Naive thymus-derived CD4-positive, alpha-beta T cell (primary cell): ENCODE measurements at regions of chr12 and their contacts with region 1.

Region 1: DNA sequence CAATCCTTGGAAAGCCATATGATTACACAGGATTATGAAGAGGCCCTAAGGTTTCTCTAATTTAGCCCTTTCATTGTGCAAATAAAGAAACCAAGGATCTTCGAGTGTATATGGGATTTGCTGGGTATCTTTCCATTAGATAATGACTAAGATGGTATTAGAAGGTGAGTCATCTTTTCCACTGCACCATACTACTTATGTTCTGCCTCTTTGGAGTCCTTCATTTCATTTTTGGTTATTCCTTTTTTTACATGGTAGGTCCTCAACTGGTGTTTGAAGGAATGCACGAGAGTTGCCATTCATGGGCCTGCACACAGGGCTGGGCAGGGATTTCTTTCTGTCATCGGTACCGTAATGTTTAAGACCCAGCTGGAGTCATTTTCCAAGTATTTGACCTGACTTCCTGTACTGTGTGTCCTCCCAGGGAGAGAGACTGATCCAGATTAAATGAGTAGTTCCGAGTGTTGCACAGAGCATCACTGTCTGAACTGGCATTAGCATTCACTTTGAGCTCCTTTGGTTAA is 85.7 kb downstream of the BORCS5 start:
- DNase-seq: peak in 1 of 9 donors; percentile 32
- ATAC-seq: no peak
- H3K4me3 ChIP-seq: no peak overlapping the region
- H3K4me3 Mint-ChIP-seq: peak overlapping the region in 9 of 10 donors; percentile 9 to 78 (median 56)
- H3K27ac ChIP-seq: peak overlapping the region; percentile 61
- H3K27ac Mint-ChIP-seq: peak overlapping the region; percentile 92 to 99 (median 97)
- H3K4me1 ChIP-seq: peaks cover 52 to 54% of the 10 kb centered on the region in 2 donors
- H3K4me1 Mint-ChIP-seq: peaks cover 39 to 72% (median 66%) of the 10 kb centered on the region in 7 donors
- H3K27me3 ChIP-seq: no peaks in the 10 kb centered on the region
- H3K27me3 Mint-ChIP-seq: no peaks in the 10 kb centered on the region

Region 2: GRCh38 chr12:12403264-12404248 is 39.1 kb before region 1 on chr12:
- CTCF ChIA-PET with region 1: interaction called, 3 read pairs
- POLR2A ChIA-PET with region 1: no interaction called
- intact Hi-C with region 1: loop called (anchors 5 kb)
- DNase-seq: peak in 7 of 9 donors; percentile 25 to 63 (median 39)
- ATAC-seq: peak; percentile 85
- H3K4me3 ChIP-seq: no peak overlapping the region
- H3K4me3 Mint-ChIP-seq: peak overlapping the region in 5 of 10 donors; percentile 6 to 21 (median 13)
- H3K27ac ChIP-seq: no peak overlapping the region
- H3K27ac Mint-ChIP-seq: peak overlapping the region; percentile 21 to 90 (median 74)
- H3K4me1 ChIP-seq: peaks cover 7 to 10% of the 10 kb centered on the region in 2 donors
- H3K4me1 Mint-ChIP-seq: peaks cover 21 to 43% (median 34%) of the 10 kb centered on the region in 7 donors
- H3K27me3 ChIP-seq: no peaks in the 10 kb centered on the region
- H3K27me3 Mint-ChIP-seq: no peaks in the 10 kb centered on the region

Region 3: GRCh38 chr12:12467688-12468261 is 25.2 kb after region 1 on chr12:
- CTCF ChIA-PET with region 1: interaction called, 7 read pairs
- POLR2A ChIA-PET with region 1: interaction called, 13 read pairs
- intact Hi-C with region 1: loop called in 1 of 2 experiments (anchors 1 kb)
- DNase-seq: peak in 3 of 9 donors; percentile 15 to 37 (median 35)
- ATAC-seq: peak; percentile 38
- H3K4me3 ChIP-seq: no peak overlapping the region
- H3K4me3 Mint-ChIP-seq: peak overlapping the region in 9 of 10 donors; percentile 16 to 70 (median 50)
- H3K27ac ChIP-seq: peak overlapping the region; percentile 75
- H3K27ac Mint-ChIP-seq: peak overlapping the region; percentile 89 to 99 (median 96)
- H3K4me1 ChIP-seq: peaks cover 29 to 39% of the 10 kb centered on the region in 2 donors
- H3K4me1 Mint-ChIP-seq: peaks cover 19 to 63% (median 52%) of the 10 kb centered on the region in 7 donors
- H3K27me3 ChIP-seq: no peaks in the 10 kb centered on the region
- H3K27me3 Mint-ChIP-seq: no peaks in the 10 kb centered on the region

Region 4: DNA sequence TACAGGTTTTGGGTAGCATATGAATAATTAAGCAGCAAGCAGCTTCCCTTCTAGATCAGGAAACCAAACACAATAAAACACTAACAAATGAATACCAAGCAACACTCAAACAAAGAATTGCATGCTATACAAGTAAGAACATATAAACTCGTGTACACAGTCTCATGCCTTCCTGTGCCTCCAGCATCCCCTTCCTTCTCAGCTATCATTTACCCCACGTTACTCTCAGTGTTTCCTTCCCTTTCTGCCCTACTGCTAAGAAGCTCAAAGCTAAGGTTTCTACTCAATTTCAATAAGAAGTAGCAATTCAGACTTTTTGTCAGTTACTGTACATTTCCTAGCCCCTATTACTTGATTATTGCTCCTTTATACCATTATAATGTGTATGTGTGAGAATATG is 39.0 kb after region 1 on chr12:
- CTCF ChIA-PET with region 1: no interaction called
- POLR2A ChIA-PET with region 1: interaction called, 10 read pairs
- intact Hi-C with region 1: loop called (anchors 1 kb)
- DNase-seq: peak in 7 of 9 donors; percentile 54 to 83 (median 66)
- ATAC-seq: peak; percentile 71
- H3K4me3 ChIP-seq: peak overlapping the region; percentile 27
- H3K4me3 Mint-ChIP-seq: peak overlapping the region in 9 of 10 donors; percentile 11 to 87 (median 76)
- H3K27ac ChIP-seq: peak overlapping the region; percentile 86
- H3K27ac Mint-ChIP-seq: peak overlapping the region; percentile 94 to 99 (median 96)
- H3K4me1 ChIP-seq: peaks cover 25 to 26% of the 10 kb centered on the region in 2 donors
- H3K4me1 Mint-ChIP-seq: peaks cover 13 to 59% (median 48%) of the 10 kb centered on the region in 7 donors
- H3K27me3 ChIP-seq: no peaks in the 10 kb centered on the region
- H3K27me3 Mint-ChIP-seq: no peaks in the 10 kb centered on the region

Region 5: GRCh38 chr12:12577786-12578185 is 135.2 kb after region 1 on chr12:
- CTCF ChIA-PET with region 1: no interaction called
- POLR2A ChIA-PET with region 1: no interaction called
- intact Hi-C with region 1: no loop called
- DNase-seq: no peak
- ATAC-seq: no peak
- H3K4me3 ChIP-seq: no peak overlapping the region
- H3K4me3 Mint-ChIP-seq: no peak overlapping the region
- H3K27ac ChIP-seq: no peak overlapping the region
- H3K27ac Mint-ChIP-seq: no peak overlapping the region
- H3K4me1 ChIP-seq: peaks cover 0 to 6% of the 10 kb centered on the region in 2 donors
- H3K4me1 Mint-ChIP-seq: peaks cover 0 to 15% (median 8%) of the 10 kb centered on the region in 7 donors
- H3K27me3 ChIP-seq: no peaks in the 10 kb centered on the region
- H3K27me3 Mint-ChIP-seq: no peaks in the 10 kb centered on the region

Region 6: DNA sequence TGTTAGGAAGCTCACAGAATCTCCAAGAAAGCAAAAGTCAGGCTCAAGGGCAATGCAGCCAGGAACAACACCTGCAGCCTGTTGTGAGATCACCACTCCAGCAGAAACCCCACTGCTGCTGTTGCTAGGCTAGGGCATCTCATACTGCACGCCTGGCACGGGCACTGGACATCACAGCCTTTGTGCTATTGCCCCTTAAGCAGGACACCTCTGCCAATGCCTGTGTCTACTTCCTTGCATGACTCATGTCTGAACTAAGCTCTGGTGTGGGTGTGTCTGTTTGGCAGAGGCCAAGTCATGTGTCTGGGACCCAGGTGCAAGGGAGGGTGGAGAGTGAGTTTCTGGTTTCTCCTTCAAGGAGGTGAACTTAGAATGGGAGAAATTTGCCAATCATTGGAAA is 360.6 kb after region 1 on chr12:
- CTCF ChIA-PET with region 1: no interaction called
- POLR2A ChIA-PET with region 1: no interaction called
- intact Hi-C with region 1: loop called in 1 of 2 experiments (anchors 1 kb)
- DNase-seq: peak in 3 of 9 donors; percentile 11 to 46 (median 35)
- ATAC-seq: peak; percentile 28
- H3K4me3 ChIP-seq: no peak overlapping the region
- H3K4me3 Mint-ChIP-seq: peak overlapping the region in 3 of 10 donors; percentile 31 to 77 (median 31)
- H3K27ac ChIP-seq: no peak overlapping the region
- H3K27ac Mint-ChIP-seq: peak overlapping the region; percentile 16 to 98 (median 73)
- H3K4me1 ChIP-seq: peaks cover 13 to 17% of the 10 kb centered on the region in 2 donors
- H3K4me1 Mint-ChIP-seq: peaks cover 25 to 64% (median 55%) of the 10 kb centered on the region in 7 donors
- H3K27me3 ChIP-seq: no peaks in the 10 kb centered on the region
- H3K27me3 Mint-ChIP-seq: no peaks in the 10 kb centered on the region